Panc1 (cell line): ENCODE measurements at regions of chr5 and their contacts with region 1.

Region 1: GRCh38 chr5:99032234-99033013 is 103.6 kb upstream of the CHD1 start:
- DNase-seq: peak; percentile 66
- ATAC-seq: peak; percentile 86
- H3K4me3 ChIP-seq: peak overlapping the region; percentile 31 to 55; a peak in 3 of 4 replicates
- H3K27ac ChIP-seq: peak overlapping the region; percentile 60; the same call in 1 of the 2 replicates
- H3K4me1 ChIP-seq: peaks cover 4% of the 10 kb centered on the region; the same call in 1 of the 2 replicates
- H3K27me3 ChIP-seq: no peaks in the 10 kb centered on the region
- CTCF ChIP-seq: peak; percentile 85

Region 2: GRCh38 chr5:98905857-98906690 is 126.3 kb before region 1 on chr5:
- CTCF ChIA-PET with region 1: no interaction called
- POLR2A ChIA-PET with region 1: no interaction called
- in situ Hi-C with region 1: no loop called
- intact Hi-C with region 1: loop called (anchors 1 kb)
- DNase-seq: no peak
- ATAC-seq: no peak; the same call in 1 of the 2 replicates
- H3K4me3 ChIP-seq: no peak overlapping the region
- H3K27ac ChIP-seq: no peak overlapping the region
- H3K4me1 ChIP-seq: peaks cover 9% of the 10 kb centered on the region
- H3K27me3 ChIP-seq: no peaks in the 10 kb centered on the region
- CTCF ChIP-seq: peak; percentile 66; the same call in 1 of the 2 replicates

Region 3: GRCh38 chr5:98928873-98929696 is 103.3 kb before region 1 on chr5 and contains the start of gene CHD1:
- CTCF ChIA-PET with region 1: no interaction called
- POLR2A ChIA-PET with region 1: no interaction called
- in situ Hi-C with region 1: no loop called
- intact Hi-C with region 1: loop called (anchors 1 kb)
- DNase-seq: peak; percentile 79
- ATAC-seq: peak; percentile 89
- H3K4me3 ChIP-seq: peak within 1 kb of the TSS; percentile 70 to 93
- H3K27ac ChIP-seq: peak within 1 kb of the TSS; percentile 94
- H3K4me1 ChIP-seq: peaks cover 21% of the 10 kb centered on the region; the same call in 1 of the 2 replicates
- H3K27me3 ChIP-seq: no peaks in the 10 kb centered on the region
- CTCF ChIP-seq: no peak
- total RNA-seq, gene CHD1: 36.5 TPM